Left ventricle myocardium superior (tissue), 1 donor: ENCODE measurements at regions of chr1 and their contacts with region 1.

Region 1: GRCh38 chr1:117051224-117052064 is 8.7 kb upstream of the TTF2 start:
- DNase-seq: peak; percentile 41
- ATAC-seq: peak; percentile 66

Region 2: DNA sequence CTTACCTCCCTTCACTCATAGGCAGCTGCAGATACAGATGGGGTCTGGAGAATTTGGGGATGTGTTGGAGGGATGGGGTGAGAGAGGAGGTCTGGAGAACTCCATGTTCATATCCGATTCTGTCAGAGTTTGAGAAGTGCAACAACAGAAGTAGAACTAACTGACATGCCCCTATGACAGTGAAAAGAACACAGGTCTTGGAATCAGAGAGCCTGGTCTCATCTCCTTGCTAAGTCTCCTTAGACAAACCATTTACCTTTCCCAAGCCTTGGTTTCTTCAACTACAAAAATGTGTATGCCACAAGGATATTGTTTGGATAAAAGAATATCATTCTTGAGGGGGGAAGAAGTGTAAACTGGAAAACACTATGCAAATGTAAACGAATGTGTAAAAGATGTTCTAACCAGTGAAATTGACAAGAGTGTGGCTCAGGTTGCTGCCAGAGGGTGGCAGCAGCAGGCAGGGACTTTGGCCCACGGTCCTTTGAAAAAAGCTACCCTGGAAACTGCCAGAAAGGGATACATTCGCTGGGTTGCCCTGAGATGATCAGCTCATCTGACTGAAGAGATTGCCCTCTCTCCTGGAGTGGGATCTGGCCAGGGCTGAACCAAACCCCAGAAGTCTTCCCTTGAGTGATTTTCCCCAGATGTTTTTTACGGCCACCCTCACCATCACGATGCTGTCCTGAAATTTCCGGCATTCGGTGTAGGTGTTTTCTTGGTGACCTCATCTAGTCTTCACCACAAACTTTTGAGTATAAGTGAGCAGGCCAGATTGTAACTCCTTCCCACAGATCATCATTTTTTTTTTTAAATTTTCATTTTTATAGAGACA is 314.2 kb before region 1 on chr1:
- intact Hi-C with region 1: loop called (anchors 5 kb)
- DNase-seq: peak; percentile 63
- ATAC-seq: peak; percentile 69

Region 3: GRCh38 chr1:117268535-117269455 is 217.4 kb after region 1 on chr1:
- intact Hi-C with region 1: no loop called
- DNase-seq: no peak
- ATAC-seq: no peak

Region 4: DNA sequence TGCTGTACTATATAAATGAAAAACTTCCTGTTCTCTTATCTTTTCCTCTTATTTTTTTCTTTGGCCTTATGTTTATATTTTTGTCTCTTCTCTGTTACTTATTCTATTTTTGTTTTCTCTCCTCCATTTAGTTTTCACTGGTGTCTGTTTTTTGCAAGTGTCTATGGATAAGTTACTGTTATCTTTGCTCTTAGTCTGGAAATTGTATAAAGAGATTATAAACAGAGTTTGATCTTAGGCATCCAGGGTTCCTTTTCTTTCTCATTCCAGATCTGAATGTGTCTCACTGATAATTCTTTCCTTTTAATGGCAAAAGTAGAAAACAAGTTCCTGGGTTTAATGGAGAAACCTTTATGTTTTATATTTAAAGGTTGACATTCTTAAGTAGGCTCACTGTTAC is 350.3 kb after region 1 on chr1:
- intact Hi-C with region 1: no loop called
- DNase-seq: no peak
- ATAC-seq: no peak